AG04449 (cell line): ENCODE measurements at regions of chr20 and their contacts with region 1.

Region 1: GRCh38 chr20:45044084-45044573 is 56.8 kb downstream of the KCNS1 start:
- DNase-seq: peak; percentile 36
- H3K4me3 ChIP-seq: no peak overlapping the region
- CTCF ChIP-seq: peak; percentile 77

Region 2: GRCh38 chr20:44800398-44801046 is 243.6 kb before region 1 on chr20:
- CTCF ChIA-PET with region 1: no interaction called
- POLR2A ChIA-PET with region 1: no interaction called
- DNase-seq: no peak
- H3K4me3 ChIP-seq: no peak overlapping the region
- CTCF ChIP-seq: no peak

Region 3: DNA sequence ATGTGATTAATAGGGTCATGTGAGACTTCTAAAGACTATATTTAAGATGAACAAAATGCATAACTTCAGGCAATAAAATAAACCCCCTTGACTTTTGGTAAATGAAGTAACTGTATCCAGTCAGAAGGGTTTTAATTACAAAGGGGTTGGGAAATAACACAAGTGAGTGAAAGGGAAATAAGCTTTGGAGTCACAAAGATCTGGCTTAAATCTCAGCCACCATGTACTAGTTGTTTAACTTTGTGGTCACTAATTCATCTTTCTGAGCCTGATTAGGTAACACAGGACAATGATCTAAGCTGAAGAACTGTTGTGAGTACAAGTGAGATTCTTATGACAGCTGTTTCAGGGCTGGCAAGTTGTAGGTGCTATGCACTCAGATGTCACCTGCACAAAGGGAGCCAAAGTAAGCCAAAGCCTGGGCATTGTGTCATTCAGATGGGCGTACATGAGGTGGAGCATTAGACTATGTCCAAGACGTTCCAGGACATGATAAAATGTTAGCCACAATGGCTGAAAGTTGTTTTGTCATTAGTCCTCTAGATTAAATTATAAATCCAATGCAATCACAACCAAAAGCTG is 97.8 kb before region 1 on chr20:
- CTCF ChIA-PET with region 1: no interaction called
- POLR2A ChIA-PET with region 1: no interaction called
- DNase-seq: no peak
- H3K4me3 ChIP-seq: no peak overlapping the region
- CTCF ChIP-seq: no peak

Region 4: GRCh38 chr20:45011108-45011526 is 33.0 kb before region 1 on chr20:
- CTCF ChIA-PET with region 1: interaction called, 79 read pairs
- POLR2A ChIA-PET with region 1: no interaction called
- DNase-seq: no peak
- H3K4me3 ChIP-seq: no peak overlapping the region
- CTCF ChIP-seq: peak; percentile 54

Region 5: DNA sequence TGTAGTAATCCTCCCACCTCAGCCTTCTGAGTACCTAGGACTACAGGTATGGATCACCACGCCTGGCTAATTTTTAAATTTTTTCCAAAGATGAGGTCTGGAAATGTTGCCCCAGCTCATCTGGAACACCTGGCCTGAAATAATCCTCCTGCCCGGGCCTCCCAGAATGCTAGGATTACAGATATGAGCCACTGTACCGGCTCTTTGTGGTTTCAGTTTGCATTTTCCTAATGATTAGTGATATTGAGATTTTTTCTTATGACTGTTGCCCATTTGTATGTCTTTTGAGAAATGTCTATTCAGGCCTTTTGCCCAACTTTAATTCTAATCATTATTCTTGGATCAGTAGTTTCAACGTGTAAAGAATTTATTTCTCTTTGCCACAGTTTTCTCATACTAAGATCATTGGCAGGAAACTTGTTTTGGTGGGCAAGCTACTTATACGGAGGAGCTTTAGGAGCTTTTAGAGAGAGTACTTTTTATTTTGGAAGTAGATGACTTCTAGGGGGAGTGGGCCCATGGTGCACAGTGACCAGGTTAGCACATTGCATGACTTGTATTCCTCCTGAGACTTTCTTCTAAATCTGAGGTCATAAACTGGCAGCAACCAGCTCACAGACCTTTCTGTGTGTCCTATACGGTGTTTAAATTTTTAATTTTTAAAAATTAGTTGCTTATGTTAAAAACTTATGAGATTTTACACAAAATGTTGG is 15.5 kb before region 1 on chr20:
- CTCF ChIA-PET with region 1: interaction called, 37 read pairs
- POLR2A ChIA-PET with region 1: no interaction called
- DNase-seq: no peak
- H3K4me3 ChIP-seq: no peak overlapping the region
- CTCF ChIP-seq: no peak

Region 6: DNA sequence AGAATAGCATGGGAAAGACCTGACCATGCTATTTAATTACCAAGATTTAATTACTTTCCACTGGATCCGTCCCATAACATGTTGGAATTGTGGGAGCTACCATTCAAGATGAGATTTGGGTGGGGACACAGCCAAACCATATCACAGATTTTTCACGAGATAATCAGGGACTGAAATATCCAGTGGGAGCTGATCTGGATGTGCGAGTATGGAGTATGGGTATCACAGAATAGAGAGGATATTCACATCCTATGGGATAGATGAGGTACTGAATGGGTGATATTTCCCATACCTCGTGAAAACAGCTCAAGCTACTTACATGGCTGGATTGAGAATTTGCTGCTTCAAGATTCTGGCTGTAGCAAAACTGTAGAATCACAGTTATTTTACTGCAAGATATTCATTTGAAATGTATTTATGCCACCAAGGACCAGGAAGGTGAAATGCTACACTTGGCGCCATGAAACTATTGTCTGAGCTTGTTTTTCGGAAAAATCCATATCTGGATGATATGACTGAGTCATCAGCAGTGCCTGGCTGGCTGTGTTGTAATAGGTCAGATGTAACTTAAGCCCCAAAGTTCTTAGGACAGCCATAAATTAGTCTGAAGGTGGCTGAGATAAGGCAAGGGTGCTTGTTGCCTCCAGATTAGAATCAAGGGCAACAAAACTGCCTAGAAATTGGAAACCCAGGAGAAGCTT is 27.0 kb after region 1 on chr20:
- CTCF ChIA-PET with region 1: interaction called, 23 read pairs
- POLR2A ChIA-PET with region 1: no interaction called
- DNase-seq: no peak
- H3K4me3 ChIP-seq: no peak overlapping the region
- CTCF ChIP-seq: no peak

Region 7: GRCh38 chr20:45088247-45088646 is 44.1 kb after region 1 on chr20:
- CTCF ChIA-PET with region 1: interaction called, 297 read pairs
- POLR2A ChIA-PET with region 1: no interaction called
- DNase-seq: peak; percentile 84
- H3K4me3 ChIP-seq: no peak overlapping the region
- CTCF ChIP-seq: no peak

Region 8: GRCh38 chr20:45181639-45182038 is 137.5 kb after region 1 on chr20:
- CTCF ChIA-PET with region 1: no interaction called
- POLR2A ChIA-PET with region 1: no interaction called
- DNase-seq: no peak
- H3K4me3 ChIP-seq: no peak overlapping the region
- CTCF ChIP-seq: no peak

Region 9: GRCh38 chr20:45283548-45284057 is 239.5 kb after region 1 on chr20:
- CTCF ChIA-PET with region 1: interaction called, 19 read pairs
- POLR2A ChIA-PET with region 1: no interaction called
- DNase-seq: no peak
- H3K4me3 ChIP-seq: no peak overlapping the region
- CTCF ChIP-seq: no peak